ENCODE measurements at regions of chrX and their contacts with region 1.

Region 1: DNA sequence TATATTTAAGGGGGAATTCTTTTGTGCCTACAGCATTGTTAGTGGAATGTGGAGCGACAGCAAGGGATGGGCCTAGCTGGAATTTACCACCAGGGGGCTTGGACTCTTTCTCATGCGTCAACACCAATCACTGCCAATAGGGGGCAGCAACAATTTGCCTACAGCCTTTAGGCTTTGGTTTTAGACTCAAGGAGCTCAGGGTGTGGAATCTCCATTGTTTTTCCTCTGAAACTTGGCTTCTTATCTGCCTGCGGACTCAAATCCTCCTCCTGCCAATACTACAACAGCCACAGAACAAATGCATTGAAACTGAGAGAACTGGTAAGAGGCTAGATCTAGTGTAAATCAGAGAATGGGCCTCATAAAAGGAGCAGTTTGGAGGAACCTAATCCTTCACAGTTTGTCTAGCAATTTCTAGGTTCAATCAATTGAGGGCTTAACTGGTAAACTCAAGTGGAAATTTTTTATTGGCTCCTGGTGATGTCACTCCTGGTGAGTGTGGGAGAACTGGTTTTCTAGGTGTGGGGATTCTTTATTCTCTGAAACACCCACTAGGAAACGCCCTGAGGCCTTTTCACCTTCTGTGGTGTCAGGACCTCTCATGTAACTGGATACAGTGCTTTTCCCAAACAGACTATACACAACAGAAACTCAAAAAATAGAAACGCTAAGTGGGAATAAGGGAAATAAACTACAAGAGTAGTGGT is 27.9 kb upstream of the TMSB4X start:
- DNase-seq: peak; percentile 64
- H3K4me3 Mint-ChIP-seq: peak overlapping the region; percentile 30
- H3K27ac Mint-ChIP-seq: peak overlapping the region; percentile 87
- H3K4me1 Mint-ChIP-seq: peaks cover 56% of the 10 kb centered on the region
- H3K27me3 Mint-ChIP-seq: no peaks in the 10 kb centered on the region

Region 2: GRCh38 chrX:12984629-12985319 is 37.8 kb after region 1 on chrX:
- intact Hi-C with region 1: loop called (anchors 5 kb)
- DNase-seq: peak; percentile 56
- H3K4me3 Mint-ChIP-seq: peak overlapping the region; percentile 49
- H3K27ac Mint-ChIP-seq: peak overlapping the region; percentile 96
- H3K4me1 Mint-ChIP-seq: peaks cover 56% of the 10 kb centered on the region
- H3K27me3 Mint-ChIP-seq: no peaks in the 10 kb centered on the region

Region 3: DNA sequence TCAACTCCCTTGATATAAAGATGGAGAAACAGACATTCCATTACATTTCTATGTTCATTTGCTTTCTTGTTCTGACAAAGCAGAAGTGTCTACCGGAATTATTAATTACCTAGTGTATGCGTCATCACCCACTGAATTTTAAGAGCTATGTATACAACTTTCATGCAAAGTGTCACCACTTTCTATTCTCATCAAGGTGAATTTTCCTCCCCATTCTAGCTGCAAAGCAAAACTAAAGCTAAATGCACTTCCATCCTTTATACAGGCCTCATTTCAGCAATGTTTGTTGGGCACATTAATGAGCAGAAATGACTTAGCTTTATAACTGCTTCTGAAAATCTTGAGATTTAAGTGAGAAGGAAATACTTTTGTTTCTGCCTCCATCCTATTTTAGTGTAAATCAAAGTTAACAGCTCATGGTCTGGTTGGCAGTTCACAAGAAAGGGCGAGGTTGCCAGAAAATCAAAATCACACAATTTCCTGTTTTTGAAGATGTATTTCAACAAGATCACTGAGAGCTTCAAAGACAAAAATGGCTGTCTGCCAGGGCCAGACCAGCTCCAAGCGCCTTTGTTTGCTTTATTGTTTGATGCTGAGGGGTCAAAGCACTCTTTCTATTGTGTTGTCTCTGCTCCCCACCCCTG is 104.7 kb after region 1 on chrX:
- intact Hi-C with region 1: loop called (anchors 1 kb)
- DNase-seq: no peak
- H3K4me3 Mint-ChIP-seq: no peak overlapping the region
- H3K27ac Mint-ChIP-seq: peak overlapping the region; percentile 85
- H3K4me1 Mint-ChIP-seq: peaks cover 34% of the 10 kb centered on the region
- H3K27me3 Mint-ChIP-seq: no peaks in the 10 kb centered on the region

Region 4: DNA sequence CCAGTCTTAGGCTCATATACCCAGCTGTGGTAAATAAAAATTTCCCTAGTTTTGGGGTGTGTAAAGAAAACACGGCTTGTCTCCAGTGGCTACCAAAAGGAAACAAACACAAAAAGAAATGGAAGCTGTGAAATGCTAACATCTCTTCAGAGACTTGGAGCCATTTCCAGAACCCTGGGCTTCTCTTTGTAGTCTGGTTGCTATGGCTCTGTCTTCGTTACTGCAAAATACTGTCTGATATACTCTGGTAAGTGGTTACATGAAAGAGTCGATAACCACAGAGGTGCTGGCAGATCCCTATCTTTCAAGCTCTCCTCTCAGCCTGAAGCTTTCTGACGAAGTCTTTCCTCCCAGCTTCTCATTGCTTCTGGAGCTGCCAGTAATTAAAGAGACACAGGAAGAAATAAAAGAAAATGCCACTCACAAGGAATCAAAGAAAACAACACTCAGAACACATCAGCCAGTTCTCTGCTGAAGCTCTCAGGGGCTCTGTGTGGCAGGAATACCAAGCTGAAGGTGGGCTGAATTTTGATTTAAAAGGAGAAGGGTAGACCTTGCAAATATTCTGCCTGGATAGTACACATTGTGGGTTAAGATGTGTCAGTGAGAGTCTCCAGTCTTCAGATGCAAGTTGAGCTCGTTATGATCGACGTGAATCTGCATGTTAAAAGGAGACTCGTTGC is 205.0 kb after region 1 on chrX:
- intact Hi-C with region 1: no loop called
- DNase-seq: peak; percentile 48
- H3K4me3 Mint-ChIP-seq: no peak overlapping the region
- H3K27ac Mint-ChIP-seq: peak overlapping the region; percentile 58
- H3K4me1 Mint-ChIP-seq: peaks cover 22% of the 10 kb centered on the region
- H3K27me3 Mint-ChIP-seq: no peaks in the 10 kb centered on the region

Region 5: GRCh38 chrX:13473442-13474163 is 526.6 kb after region 1 on chrX:
- intact Hi-C with region 1: loop called (anchors 5 kb)
- DNase-seq: no peak
- H3K4me3 Mint-ChIP-seq: peak overlapping the region; percentile 69
- H3K27ac Mint-ChIP-seq: peak overlapping the region; percentile 88
- H3K4me1 Mint-ChIP-seq: peaks cover 32% of the 10 kb centered on the region
- H3K27me3 Mint-ChIP-seq: no peaks in the 10 kb centered on the region

Region 6: DNA sequence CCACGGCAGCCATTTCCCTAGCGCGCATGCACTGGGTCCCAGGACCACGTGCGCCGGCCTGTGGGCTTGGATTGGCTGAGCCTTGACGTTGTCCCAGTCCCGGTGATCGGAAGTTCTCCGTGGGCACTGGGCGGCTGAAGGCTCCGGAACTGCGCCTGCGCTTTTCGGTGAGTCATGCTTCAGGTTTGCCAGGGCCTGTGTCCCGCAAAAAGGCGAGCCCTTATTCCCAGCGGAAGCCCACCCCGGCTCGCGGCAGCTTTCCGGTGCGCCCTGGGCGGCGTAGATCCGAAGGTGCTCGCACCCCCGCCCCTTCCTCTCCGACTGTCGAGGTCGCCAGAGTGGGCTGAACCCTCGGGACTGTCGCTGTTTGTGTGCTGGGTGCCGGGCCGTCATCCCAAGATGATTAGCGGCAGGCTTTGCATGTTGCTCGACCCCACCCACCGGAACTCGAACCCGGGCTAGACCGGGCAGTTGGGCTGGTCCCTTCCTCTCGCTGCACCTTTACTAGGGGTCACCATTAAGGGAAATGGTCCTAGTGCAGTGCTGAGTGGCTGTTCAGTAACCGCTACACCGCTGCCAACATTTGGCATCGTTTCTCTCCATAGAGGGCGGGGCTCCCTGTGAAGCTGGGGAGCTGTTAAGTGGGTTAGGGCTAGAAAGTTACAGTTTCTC is 706.2 kb after region 1 on chrX and contains the start of gene TCEANC:
- intact Hi-C with region 1: loop called (anchors 10 kb)
- DNase-seq: peak; percentile 91
- H3K4me3 Mint-ChIP-seq: peak within 1 kb of the TSS; percentile 84
- H3K27ac Mint-ChIP-seq: peak within 1 kb of the TSS; percentile 89
- H3K4me1 Mint-ChIP-seq: peaks cover 17% of the 10 kb centered on the region
- H3K27me3 Mint-ChIP-seq: no peaks in the 10 kb centered on the region
- total RNA-seq, gene TCEANC: 2.5 and 2.8 TPM in 2 replicates

Region 7: DNA sequence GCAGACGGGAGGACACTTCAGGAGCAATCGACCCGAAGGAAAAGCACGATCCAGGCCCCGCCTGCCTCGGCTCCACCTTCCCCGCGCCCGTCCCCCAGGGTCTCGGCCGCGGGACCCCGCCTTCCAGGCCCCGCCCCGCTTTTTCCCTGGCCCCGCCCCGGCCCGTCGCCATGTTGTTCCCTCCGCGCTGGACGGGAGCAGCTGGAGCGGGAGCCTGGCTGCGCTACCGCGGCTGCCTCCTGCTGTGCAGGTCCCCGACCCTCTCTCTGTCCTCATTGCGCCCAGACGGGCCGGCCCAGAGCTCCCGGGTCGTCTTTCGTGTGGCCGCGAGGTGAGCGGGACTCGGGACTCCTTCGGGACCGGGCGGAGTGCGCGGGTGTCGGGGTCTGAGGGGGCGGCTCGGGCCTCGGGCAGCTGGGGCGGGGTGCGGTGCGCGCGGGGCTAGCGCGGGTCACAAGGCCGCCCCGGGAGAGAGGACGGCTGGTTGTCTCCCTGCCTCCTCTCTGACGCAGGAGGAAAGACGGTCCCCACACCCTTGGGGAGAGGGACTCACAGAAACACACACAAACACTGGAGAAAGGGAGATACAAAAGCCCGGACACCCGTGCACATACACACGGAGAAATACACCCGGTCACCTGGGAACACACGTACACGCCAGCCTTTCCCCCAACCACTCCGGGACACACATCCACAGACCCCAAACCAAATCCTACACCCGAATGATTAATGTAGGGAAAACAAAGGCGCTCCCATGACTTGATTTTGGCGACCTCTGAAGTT is 742.2 kb after region 1 on chrX and contains the start of gene RAB9A:
- intact Hi-C with region 1: no loop called
- DNase-seq: peak; percentile 71
- H3K4me3 Mint-ChIP-seq: peak within 1 kb of the TSS; percentile 87
- H3K27ac Mint-ChIP-seq: peak within 1 kb of the TSS; percentile 93
- H3K4me1 Mint-ChIP-seq: peaks cover 48% of the 10 kb centered on the region
- H3K27me3 Mint-ChIP-seq: no peaks in the 10 kb centered on the region
- total RNA-seq, gene RAB9A: 13.0 and 14.6 TPM in 2 replicates